ENCODE measurements at regions of chr1 and their contacts with region 1.

Region 1: GRCh38 chr1:18913065-18913835 is 10.9 kb upstream of the ALDH4A1 start:
- DNase-seq: no peak
- ATAC-seq: peak; percentile 85
- H3K4me3 ChIP-seq: no peak overlapping the region
- H3K27ac ChIP-seq: peak overlapping the region; percentile 75
- H3K4me1 ChIP-seq: peaks cover 29% of the 10 kb centered on the region
- H3K27me3 ChIP-seq: no peaks in the 10 kb centered on the region
- CTCF ChIP-seq: peak; percentile 100

Region 2: DNA sequence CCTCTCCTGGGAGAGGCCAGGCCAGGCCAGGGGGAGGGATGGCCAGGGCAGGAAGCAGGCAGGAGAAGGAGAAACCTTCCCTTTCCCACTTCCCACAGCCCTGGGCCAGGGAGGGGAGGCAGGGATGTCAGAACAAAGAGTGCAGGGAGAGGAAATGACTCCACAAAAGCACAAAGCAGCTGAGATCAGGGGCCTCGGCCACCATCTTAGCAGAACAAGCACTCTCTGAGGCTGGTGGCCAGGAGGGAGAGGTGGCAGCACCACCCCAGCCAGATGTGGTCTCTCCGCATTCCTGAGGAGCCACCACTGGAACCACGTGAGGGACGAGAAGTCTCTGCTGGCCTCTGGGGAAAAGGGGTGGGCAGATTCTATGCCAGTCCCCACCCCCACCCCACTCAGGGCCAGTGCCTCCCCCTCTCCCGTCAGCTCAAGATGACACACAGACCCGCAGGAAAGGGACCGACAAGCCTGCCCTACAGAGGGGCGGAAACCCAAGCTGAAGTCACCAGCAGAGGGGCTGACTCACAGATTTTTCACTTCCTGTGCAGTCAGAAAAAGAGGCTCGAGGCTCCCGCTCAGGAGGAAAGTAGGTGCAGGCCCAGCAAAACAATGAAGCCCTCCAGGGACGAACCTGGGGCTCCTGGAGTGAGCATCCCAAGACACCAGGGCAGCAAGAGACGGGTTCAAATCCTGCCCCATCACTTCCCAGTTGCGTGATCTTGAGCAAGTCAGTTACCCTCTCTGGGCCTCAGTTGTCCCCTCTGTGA is 13.2 kb after region 1 on chr1:
- CTCF ChIA-PET with region 1: interaction called, 15 read pairs
- POLR2A ChIA-PET with region 1: no interaction called
- in situ Hi-C with region 1: no loop called
- intact Hi-C with region 1: no loop called
- DNase-seq: peak; percentile 88
- ATAC-seq: peak; percentile 75
- H3K4me3 ChIP-seq: peak overlapping the region in 1 of 2 experiments; percentile 17; a peak in 1 of 4 replicates
- H3K27ac ChIP-seq: peak overlapping the region; percentile 95
- H3K4me1 ChIP-seq: peaks cover 86% of the 10 kb centered on the region
- H3K27me3 ChIP-seq: no peaks in the 10 kb centered on the region
- CTCF ChIP-seq: no peak

Region 3: GRCh38 chr1:18949686-18950400 is 36.6 kb after region 1 on chr1:
- CTCF ChIA-PET with region 1: interaction called, 3 read pairs
- POLR2A ChIA-PET with region 1: no interaction called
- in situ Hi-C with region 1: no loop called
- intact Hi-C with region 1: loop called (anchors 5 kb)
- DNase-seq: no peak
- ATAC-seq: peak; percentile 23
- H3K4me3 ChIP-seq: peak overlapping the region; percentile 71 to 85
- H3K27ac ChIP-seq: peak overlapping the region; percentile 89
- H3K4me1 ChIP-seq: peaks cover 82% of the 10 kb centered on the region
- H3K27me3 ChIP-seq: no peaks in the 10 kb centered on the region
- CTCF ChIP-seq: no peak

Measured in Panc1 (cell line).